Left colon (tissue), 2 donors: ENCODE measurements at regions of chr1 and their contacts with region 1.

Region 1: DNA sequence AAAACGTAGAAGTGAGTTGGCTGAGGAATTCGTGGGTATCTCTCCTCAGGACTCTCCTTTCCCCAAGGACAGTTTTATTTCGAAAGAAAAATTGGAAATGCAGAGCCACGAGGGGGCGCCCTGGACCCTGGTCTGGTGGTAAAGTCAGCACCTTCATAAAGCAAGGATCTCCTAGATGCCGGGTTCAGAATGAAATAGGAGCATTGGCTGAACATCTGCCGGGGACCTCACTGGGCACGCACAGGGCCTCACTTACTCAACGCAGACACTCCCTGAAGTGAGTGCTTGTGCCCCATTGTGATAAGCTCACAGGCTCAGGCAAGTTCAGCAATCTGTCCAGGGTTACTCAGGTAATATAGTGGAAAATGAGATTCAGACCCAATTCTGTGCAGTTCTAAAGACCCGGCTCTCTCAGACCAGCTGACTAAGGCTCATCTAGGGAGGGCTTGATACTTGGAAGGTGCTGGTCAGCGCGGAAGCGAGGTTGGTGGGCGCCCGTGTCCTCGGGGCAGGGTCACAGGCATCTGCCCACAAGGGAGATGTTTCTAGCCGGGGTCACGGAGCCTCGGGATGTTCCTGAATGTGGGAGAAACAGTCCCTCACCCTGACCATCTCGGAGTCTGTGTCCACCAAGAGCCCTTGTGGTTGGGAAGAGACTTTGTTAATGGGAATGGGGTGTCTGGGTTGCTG is 55.7 kb upstream of the ETV3 start:
- DNase-seq: peak in 1 of 2 donors; percentile 83
- ATAC-seq: peak; percentile 45

Region 2: DNA sequence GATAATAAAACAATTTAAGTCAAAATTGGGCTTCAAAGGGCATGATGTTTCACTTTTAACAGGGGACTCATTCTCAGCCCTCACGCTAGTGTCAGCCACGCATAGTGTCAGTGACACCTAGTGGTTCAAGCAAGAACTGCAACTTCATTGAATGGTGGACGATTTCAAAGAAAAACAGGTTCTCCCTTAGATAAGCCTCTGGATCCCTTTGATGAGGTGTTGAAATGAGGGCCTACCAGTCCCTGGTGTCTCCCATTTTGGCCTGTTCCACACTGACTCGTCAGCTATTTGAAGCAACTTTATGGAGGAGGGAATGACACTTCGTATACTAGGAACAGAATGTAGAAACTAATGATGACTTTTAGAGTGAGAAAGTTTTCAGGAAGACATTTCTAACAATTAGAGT is 302.3 kb after region 1 on chr1:
- intact Hi-C with region 1: loop called in 1 of 2 experiments (anchors 5 kb)
- DNase-seq: no peak
- ATAC-seq: peak; percentile 42